HAP-1 (cell line): ENCODE measurements at regions of chr9 and their contacts with region 1.

Region 1: DNA sequence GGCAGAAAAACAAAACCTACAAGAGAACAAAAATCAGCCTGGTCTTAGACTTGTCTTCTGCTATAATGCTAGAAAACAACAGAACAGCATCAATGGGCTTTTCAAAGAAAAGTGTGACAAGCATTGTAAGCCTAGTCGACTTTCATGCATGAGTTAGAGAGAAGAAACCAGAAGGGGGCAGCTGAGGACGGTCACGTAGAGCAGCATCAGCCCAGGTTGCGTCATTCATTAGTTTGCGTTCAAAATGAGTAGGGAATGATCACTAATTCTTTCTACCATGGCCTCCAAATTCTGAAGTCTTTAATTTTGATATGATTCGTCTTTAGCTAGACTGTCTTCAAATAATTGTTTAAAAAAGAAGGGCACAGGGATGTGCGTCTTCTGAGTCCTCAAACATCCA is 4.7 kb upstream of the ISCA1 start:
- DNase-seq: peak; percentile 77 to 84
- H3K4me3 ChIP-seq: no peak overlapping the region
- H3K4me1 ChIP-seq: peaks cover 15% of the 10 kb centered on the region
- H3K27me3 ChIP-seq: no peaks in the 10 kb centered on the region

Region 2: DNA sequence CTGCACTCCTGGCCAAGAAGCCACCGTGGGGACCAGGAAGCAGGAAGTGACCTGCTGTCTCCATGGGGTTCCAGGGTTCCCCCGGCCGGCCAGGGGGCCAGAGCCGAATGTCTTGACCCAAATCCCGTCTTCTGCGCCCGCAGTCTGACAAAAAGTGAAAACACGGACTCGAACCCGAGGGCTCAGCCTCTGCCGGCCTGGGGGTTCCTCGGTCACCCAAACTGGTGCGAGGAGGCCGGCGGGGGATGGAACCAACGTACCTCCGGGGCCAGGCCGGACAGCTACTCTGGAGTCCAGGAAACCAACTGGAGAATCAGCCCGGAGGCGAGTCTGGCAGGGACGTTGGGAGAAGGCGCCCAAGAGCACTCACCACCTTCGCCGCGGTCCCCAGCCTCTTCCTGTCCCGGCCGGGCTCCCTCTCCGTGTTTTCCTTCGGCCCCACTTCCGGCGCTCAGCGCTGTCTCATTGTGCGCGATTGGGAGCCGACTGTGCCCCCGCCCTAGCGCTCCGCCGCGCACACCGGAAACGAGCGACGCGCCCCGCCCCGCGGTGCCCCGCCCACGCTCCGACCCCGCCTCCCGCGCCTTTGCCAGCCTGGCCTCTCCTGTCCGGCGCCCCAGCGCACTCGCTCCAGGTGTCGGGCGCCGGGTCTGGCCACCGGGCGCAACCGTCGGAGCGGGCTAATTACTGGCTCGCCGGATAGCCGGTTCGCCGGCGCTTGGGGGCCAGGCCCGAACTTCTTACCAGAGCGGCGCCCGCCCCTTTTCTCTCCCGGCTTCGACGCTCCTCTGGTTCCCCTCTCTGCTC is 67.2 kb after region 1 on chr9 and contains the start of gene TUT7:
- in situ Hi-C with region 1: loop called (anchors 5 kb)
- DNase-seq: peak; percentile 91 to 97
- H3K4me3 ChIP-seq: peak within 1 kb of the TSS; percentile 95
- H3K4me1 ChIP-seq: peaks cover 22% of the 10 kb centered on the region
- H3K27me3 ChIP-seq: no peaks in the 10 kb centered on the region